ENCODE measurements at regions of chr1 and their contacts with region 1.

Region 1: DNA sequence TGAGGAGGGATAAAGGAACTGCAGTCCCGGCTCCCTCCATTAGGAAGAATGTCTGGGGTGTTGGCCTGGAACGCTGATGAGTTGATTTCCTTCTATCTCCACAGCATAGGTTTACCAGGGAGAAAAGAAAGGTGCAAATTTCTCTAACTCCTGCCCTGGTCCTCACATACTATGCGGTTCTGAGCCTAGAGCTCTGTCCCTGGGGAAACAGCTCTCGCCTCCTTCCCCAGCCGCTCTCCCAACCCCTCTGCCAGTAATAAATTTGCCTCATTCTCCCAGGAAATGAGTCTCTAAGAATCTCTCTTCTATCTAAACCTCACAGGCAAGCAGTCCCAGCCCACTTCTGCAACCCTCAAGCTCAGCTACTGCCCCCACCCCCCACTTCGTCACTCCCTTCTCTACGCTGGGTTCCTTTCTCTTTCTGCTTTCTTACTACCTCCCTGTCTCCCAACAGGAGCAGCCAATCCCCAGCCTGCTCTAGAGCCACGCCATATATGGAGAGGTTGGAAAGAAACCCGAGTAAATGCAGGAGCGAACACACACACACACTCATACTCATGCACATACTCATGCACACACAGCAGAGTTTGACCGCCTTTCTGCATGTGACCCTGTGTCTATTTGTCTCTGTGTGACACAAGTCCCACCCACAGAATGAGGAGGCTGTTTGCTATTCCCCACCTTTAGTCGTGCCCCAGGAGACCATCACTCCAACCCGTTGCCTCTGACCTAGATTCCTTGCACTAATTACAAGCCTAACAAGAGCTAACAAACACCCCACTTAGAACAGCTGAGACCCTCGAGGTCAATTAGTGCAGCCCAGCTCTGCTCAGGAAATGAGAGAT is 13.4 kb downstream of the PLEKHO1 start:
- DNase-seq: peak; percentile 81
- H3K4me3 ChIP-seq: peak overlapping the region in 1 of 4 donors; percentile 35
- H3K27ac ChIP-seq: peak overlapping the region; percentile 92 to 96 (median 94)
- H3K4me1 ChIP-seq: peaks cover 33 to 73% (median 47%) of the 10 kb centered on the region in 4 donors
- H3K27me3 ChIP-seq: no peaks in the 10 kb centered on the region
- CTCF ChIP-seq: peak in 3 of 5 experiments; percentile 23 to 41 (median 27)
- EP300 ChIP-seq: no peak
- POLR2A ChIP-seq: peak; percentile 73

Region 2: DNA sequence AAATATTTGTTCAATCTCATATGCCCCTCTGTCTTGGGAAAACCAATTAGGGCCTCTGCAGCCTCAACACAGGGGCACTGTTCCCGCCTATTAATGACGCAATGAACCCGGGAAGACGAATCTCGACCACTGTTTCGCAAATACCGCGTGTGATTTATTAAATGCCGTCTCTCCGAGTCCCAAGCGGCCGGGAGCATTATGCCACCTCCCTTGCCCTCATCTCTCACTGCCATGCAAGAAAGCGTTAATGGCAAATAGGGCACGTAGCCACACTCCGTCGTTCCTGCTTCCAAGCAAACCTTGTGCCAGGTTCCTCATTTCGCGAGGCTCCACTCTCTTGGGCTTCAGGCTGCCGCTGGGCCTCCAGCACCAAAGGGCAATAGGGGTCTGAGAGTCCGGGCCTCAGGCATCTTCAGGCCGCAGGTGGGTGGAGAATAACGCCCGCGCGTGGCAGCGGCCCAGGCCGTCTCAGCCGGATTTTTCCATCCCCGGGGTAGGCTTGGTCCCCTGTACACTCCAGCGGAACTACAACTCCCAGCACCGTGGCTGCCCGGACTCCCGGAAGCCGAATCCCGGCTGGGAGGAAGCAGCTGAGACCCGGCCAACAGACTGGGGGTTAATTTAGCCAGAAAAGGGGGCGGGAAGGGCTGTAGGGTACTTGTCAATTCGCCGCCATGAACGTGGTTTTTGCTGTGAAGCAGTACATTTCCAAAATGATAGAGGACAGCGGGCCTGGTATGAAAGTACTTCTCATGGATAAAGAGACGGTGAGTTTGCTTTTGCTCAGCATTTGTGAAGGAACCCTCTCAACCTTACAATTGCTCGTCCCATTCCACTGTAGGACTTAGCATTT is 95.7 kb before region 1 on chr1 and contains the start of gene VPS45:
- in situ Hi-C with region 1: loop called in 3 of 4 experiments (anchors 5 to 25 kb)
- intact Hi-C with region 1: no loop called
- DNase-seq: peak; percentile 92
- H3K4me3 ChIP-seq: peak within 1 kb of the TSS; percentile 49 to 86 (median 60)
- H3K27ac ChIP-seq: peak within 1 kb of the TSS; percentile 91 to 94 (median 93)
- H3K4me1 ChIP-seq: peaks cover 0 to 35% (median 11%) of the 10 kb centered on the region in 4 donors
- H3K27me3 ChIP-seq: no peaks in the 10 kb centered on the region
- CTCF ChIP-seq: peak in 3 of 5 experiments; percentile 19 to 62 (median 46)
- EP300 ChIP-seq: no peak
- POLR2A ChIP-seq: peak; percentile 60
- total RNA-seq, gene VPS45: 16.1 to 47.5 (median 34.7) TPM

Region 3: GRCh38 chr1:151399890-151400495 is 1236.9 kb after region 1 on chr1:
- in situ Hi-C with region 1: no loop called
- intact Hi-C with region 1: no loop called
- DNase-seq: no peak
- H3K4me3 ChIP-seq: peak overlapping the region; percentile 78 to 100 (median 83)
- H3K27ac ChIP-seq: peak overlapping the region; percentile 89 to 97 (median 92)
- H3K4me1 ChIP-seq: peaks cover 7 to 17% (median 8%) of the 10 kb centered on the region in 4 donors
- H3K27me3 ChIP-seq: no peaks in the 10 kb centered on the region
- CTCF ChIP-seq: no peak
- EP300 ChIP-seq: no peak
- POLR2A ChIP-seq: no peak